ENCODE measurements at regions of chr15 and their contacts with region 1.

Region 1: DNA sequence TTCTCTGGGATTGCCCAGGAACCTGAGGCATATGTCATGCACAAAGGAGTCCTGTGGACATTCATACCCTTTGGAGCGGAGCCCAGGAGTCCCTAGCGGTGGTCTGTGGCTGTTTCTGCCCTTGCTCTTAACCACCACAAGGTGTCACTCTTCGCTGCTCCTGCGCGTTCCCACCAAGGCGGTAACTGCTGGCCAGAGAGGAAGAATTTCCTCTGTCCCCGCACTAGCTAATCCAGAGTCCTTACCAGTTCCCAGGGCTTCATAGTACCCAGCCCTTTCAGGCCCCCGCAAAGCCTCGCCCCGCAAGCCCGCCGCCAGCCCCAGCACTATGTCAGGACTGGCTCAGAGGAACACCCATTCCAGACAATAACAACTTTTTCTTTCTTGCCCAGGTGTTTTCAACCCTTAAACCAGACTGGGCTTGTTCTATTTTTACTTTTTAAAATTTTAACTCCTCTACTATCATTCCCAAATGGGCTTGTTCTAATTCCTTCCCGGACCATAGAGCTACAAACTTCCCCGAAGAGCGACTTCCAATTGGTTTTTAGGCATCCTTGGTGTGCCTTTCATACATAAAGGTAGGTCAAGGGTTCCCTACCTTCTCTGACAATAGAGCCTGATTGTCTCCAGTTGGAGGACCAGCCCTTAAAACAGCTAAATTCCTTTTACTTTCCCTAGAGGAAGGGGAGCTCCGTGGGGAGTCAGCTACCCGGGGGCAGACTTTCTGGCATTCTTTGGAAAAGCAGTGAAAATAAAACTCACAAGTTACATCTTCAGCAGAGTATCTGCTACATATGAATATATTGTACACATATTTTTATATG is 31.8 kb upstream of the ZNF774 start:
- DNase-seq: peak; percentile 42
- ATAC-seq: peak; percentile 100
- H3K4me3 Mint-ChIP-seq: peak overlapping the region; percentile 5
- H3K27ac Mint-ChIP-seq: no peak overlapping the region
- H3K4me1 Mint-ChIP-seq: peaks cover 2% of the 10 kb centered on the region
- H3K27me3 Mint-ChIP-seq: no peaks in the 10 kb centered on the region
- CTCF ChIP-seq: no peak

Region 2: DNA sequence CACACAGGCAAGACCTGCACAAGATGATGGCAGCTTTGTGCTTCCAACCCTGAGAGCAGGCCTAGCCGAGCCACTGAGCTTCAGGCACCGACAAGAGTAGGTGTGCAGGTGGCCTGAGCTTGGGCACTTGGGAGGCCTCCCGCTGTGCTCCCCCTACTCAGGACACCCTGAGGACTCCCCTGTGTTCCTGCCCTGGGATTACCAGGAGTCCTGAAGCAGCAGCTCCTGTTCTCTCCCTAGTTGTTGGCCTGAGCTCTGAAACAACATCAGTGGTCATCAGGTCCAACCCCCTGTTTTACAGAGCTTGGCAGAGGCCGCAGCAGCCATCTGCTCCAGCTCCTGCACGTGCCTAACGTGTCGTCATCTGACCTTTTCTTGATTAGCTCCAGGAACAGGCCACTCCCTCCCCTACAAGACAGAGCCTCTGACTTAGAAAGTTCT is 552.2 kb before region 1 on chr15:
- CTCF ChIA-PET with region 1: no interaction called
- POLR2A ChIA-PET with region 1: no interaction called
- intact Hi-C with region 1: no loop called
- DNase-seq: no peak
- ATAC-seq: no peak
- H3K4me3 Mint-ChIP-seq: no peak overlapping the region
- H3K27ac Mint-ChIP-seq: no peak overlapping the region
- H3K4me1 Mint-ChIP-seq: no peaks in the 10 kb centered on the region
- H3K27me3 Mint-ChIP-seq: no peaks in the 10 kb centered on the region
- CTCF ChIP-seq: no peak

Region 3: DNA sequence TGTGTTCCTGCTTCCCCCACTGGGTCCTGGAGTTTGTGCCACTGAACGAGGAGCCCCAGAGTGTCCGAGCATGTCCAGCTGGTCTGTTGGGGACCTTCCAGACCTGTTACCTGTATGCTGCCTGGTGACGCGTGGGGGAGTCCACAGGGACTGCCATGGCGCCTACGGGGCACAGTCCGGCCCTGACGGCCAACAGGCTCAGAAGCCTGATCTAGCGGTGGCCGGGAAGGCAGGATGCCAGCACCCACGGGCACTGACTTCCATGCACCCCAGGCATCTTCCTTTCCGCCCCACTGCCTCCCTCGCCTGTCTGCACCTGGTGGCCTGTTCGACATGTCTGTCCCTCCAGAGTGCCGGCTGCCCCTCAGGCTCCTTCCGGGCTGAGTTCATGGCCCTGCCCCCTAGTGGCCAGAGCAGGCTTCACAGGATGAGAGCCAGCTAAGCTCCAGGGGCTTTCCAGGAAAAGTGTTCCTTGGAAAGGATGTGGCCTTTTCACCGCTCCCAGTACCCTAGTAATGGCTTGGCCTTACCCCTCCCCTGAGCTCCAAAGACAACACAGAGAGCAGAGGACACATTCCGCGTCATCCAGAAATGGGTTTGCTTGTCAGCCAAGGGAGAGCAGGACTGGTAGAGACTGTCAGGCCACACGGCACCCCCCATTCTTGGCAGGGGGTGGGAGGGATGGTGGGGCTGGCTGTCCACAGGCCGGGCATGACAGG is 19.1 kb before region 1 on chr15:
- CTCF ChIA-PET with region 1: interaction called, 19 read pairs
- POLR2A ChIA-PET with region 1: interaction called, 4 read pairs
- intact Hi-C with region 1: no loop called
- DNase-seq: peak; percentile 46
- ATAC-seq: peak; percentile 70
- H3K4me3 Mint-ChIP-seq: no peak overlapping the region
- H3K27ac Mint-ChIP-seq: no peak overlapping the region
- H3K4me1 Mint-ChIP-seq: peaks cover 5% of the 10 kb centered on the region
- H3K27me3 Mint-ChIP-seq: no peaks in the 10 kb centered on the region
- CTCF ChIP-seq: peak; percentile 44

Region 4: GRCh38 chr15:90334304-90334731 is 14.0 kb after region 1 on chr15:
- CTCF ChIA-PET with region 1: interaction called, 13 read pairs
- POLR2A ChIA-PET with region 1: no interaction called
- intact Hi-C with region 1: no loop called
- DNase-seq: no peak
- ATAC-seq: no peak
- H3K4me3 Mint-ChIP-seq: no peak overlapping the region
- H3K27ac Mint-ChIP-seq: no peak overlapping the region
- H3K4me1 Mint-ChIP-seq: peaks cover 7% of the 10 kb centered on the region
- H3K27me3 Mint-ChIP-seq: peaks cover under 1% of the 10 kb centered on the region
- CTCF ChIP-seq: no peak

Region 5: DNA sequence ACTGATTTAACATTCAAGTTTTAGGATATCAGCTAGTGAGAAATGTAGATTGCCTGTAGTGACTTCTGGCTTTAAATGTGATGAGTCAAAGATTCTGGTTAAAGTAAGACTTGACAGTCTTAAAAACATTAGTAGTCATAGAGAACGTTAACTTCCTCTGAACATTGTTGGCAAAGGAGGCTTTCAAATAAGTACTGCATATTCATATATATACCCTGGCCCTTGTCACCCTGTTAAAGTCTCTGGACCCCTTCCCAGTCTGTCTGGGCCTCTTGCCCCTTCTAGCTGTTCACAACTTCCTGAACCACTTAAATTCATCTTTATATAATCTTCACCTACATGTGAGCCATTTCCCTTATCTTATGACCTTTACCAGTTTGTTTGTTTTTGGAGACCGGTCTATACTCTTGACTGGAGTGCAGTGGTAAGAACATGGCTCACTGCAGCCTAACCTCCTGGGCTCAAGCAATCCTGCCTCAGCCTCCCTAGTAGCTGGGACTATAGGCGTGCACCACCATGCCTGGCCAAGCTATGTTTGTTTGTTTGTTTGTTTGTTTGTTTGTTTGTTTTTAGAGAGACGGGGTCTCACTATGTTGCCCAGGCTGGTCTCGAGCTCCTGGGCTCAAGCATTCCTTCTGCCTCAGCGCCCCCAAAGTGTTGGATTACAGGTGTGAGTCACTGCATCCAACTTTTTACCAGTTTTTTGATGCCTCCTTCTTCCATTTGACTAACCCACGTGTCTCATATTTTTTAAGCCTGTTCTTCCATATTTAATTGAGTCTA is 145.1 kb after region 1 on chr15:
- CTCF ChIA-PET with region 1: interaction called, 12 read pairs
- POLR2A ChIA-PET with region 1: no interaction called
- intact Hi-C with region 1: no loop called
- DNase-seq: no peak
- ATAC-seq: no peak
- H3K4me3 Mint-ChIP-seq: no peak overlapping the region
- H3K27ac Mint-ChIP-seq: no peak overlapping the region
- H3K4me1 Mint-ChIP-seq: peaks cover 3% of the 10 kb centered on the region
- H3K27me3 Mint-ChIP-seq: no peaks in the 10 kb centered on the region
- CTCF ChIP-seq: no peak

Region 6: DNA sequence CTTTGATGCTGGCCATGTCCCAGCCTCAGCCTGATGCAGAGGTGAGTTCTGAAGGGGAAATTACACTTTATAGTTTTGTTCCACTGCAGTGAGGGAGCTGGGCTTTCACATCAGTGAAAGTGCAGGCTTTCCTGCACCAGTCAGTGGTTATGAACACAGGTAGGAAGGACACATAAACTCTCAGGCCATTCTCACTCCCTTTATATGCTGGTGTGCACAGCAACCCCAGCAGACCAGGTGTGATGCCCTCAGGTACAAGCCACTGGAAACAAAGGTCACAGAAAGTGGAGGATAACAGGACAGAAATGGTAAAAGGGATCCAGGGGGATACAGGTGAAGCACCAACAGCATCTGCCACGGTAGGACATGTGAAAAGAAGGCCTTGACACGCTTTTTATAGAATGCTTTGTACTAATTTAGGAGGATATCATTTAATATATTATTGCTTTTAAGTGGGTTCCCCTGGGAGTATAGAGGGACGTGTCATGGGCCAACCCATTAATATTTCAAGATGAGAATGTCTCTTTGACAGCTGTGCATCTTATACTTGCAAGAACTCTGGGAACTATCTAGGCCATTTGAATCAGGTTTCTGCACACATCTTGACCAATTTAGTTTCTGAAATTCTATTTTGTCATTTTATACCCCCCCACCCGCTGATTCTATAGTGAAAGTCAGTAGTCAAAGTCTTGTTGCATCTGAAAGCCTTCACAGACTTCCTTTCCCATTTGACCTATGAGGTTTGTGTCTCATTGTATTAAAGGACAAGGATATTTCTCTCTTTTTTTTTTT is 371.9 kb after region 1 on chr15:
- CTCF ChIA-PET with region 1: no interaction called
- POLR2A ChIA-PET with region 1: no interaction called
- intact Hi-C with region 1: loop called (anchors 1 kb)
- DNase-seq: no peak
- ATAC-seq: no peak
- H3K4me3 Mint-ChIP-seq: no peak overlapping the region
- H3K27ac Mint-ChIP-seq: no peak overlapping the region
- H3K4me1 Mint-ChIP-seq: no peaks in the 10 kb centered on the region
- H3K27me3 Mint-ChIP-seq: no peaks in the 10 kb centered on the region
- CTCF ChIP-seq: no peak

Measured in activated B cell treated with CpG ODN at 0.5 μM for 24 hours (primary cell).